ENCODE measurements at regions of chr16 and their contacts with region 1.

Region 1: GRCh38 chr16:49324703-49325102 is 43.1 kb upstream of the CBLN1 start:
- DNase-seq: no peak
- H3K4me3 ChIP-seq: no peak overlapping the region
- H3K27me3 ChIP-seq: no peaks in the 10 kb centered on the region
- CTCF ChIP-seq: no peak

Region 2: GRCh38 chr16:49271363-49271762 is 53.3 kb before region 1 on chr16:
- CTCF ChIA-PET with region 1: no interaction called
- POLR2A ChIA-PET with region 1: interaction called, 20 read pairs
- DNase-seq: no peak
- H3K4me3 ChIP-seq: no peak overlapping the region
- H3K27me3 ChIP-seq: peaks cover 18% of the 10 kb centered on the region
- CTCF ChIP-seq: no peak

Measured in BJ (cell line).